Activated CD4-positive, alpha-beta T cell treated with anti-CD3 and anti-CD28 coated beads, Interleukin-2, amount 10 ng/mL, durations not matched to agents 24 days and 14 days (primary cell): ENCODE measurements at regions of chr4 and their contacts with region 1.

Region 1: GRCh38 chr4:29213020-29213419 is 1507.1 kb upstream of the PCDH7 start:
- DNase-seq: no peak
- H3K4me3 Mint-ChIP-seq: no peak overlapping the region
- H3K27ac Mint-ChIP-seq: no peak overlapping the region
- H3K4me1 Mint-ChIP-seq: no peaks in the 10 kb centered on the region
- H3K27me3 Mint-ChIP-seq: no peaks in the 10 kb centered on the region

Region 2: DNA sequence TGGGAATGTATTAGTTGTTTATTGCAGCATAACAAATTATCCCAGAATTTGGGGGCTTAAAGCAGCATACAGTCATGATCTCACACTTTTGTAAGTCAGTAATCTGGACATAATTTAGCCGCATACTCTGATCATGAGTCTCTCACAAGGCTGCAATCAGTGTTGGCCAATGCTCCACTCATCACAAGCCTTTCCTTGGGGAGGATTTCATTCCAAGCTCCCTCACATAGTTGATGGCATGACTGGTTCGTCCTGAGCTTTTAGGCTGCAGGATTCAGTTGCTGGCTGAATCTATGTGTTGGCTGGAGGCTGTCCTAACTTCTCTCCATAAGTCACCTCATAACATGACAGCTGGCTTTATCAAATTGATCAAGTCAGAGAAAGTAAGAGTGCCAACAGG is 61.4 kb before region 1 on chr4:
- intact Hi-C with region 1: no loop called
- DNase-seq: no peak
- H3K4me3 Mint-ChIP-seq: no peak overlapping the region
- H3K27ac Mint-ChIP-seq: no peak overlapping the region
- H3K4me1 Mint-ChIP-seq: no peaks in the 10 kb centered on the region
- H3K27me3 Mint-ChIP-seq: no peaks in the 10 kb centered on the region

Region 3: GRCh38 chr4:29199485-29199884 is 13.5 kb before region 1 on chr4:
- intact Hi-C with region 1: loop called (anchors 1 kb)
- DNase-seq: no peak
- H3K4me3 Mint-ChIP-seq: no peak overlapping the region
- H3K27ac Mint-ChIP-seq: no peak overlapping the region
- H3K4me1 Mint-ChIP-seq: no peaks in the 10 kb centered on the region
- H3K27me3 Mint-ChIP-seq: no peaks in the 10 kb centered on the region

Region 4: GRCh38 chr4:29364119-29364518 is 151.1 kb after region 1 on chr4:
- intact Hi-C with region 1: no loop called
- DNase-seq: no peak
- H3K4me3 Mint-ChIP-seq: no peak overlapping the region
- H3K27ac Mint-ChIP-seq: no peak overlapping the region
- H3K4me1 Mint-ChIP-seq: no peaks in the 10 kb centered on the region
- H3K27me3 Mint-ChIP-seq: no peaks in the 10 kb centered on the region